Activated CD4-positive, alpha-beta T cell treated with anti-CD3 and anti-CD28 coated beads, Interleukin-2, amount 10 ng/mL, durations not matched to agents 24 days and 14 days (primary cell): ENCODE measurements at regions of chr1 and their contacts with region 1.

Region 1: GRCh38 chr1:179002552-179003345 is 22.9 kb upstream of the FAM20B start:
- DNase-seq: peak; percentile 90
- H3K4me3 Mint-ChIP-seq: no peak overlapping the region
- H3K27ac Mint-ChIP-seq: peak overlapping the region; percentile 21
- H3K4me1 Mint-ChIP-seq: peaks cover 6% of the 10 kb centered on the region
- H3K27me3 Mint-ChIP-seq: no peaks in the 10 kb centered on the region

Region 2: GRCh38 chr1:178532392-178532791 is 470.4 kb before region 1 on chr1:
- intact Hi-C with region 1: loop called (anchors 2 kb)
- DNase-seq: peak; percentile 92
- H3K4me3 Mint-ChIP-seq: no peak overlapping the region
- H3K27ac Mint-ChIP-seq: no peak overlapping the region
- H3K4me1 Mint-ChIP-seq: peaks cover 2% of the 10 kb centered on the region
- H3K27me3 Mint-ChIP-seq: no peaks in the 10 kb centered on the region

Region 3: GRCh38 chr1:178542560-178543356 is 460.0 kb before region 1 on chr1:
- intact Hi-C with region 1: loop called (anchors 1 kb)
- DNase-seq: peak; percentile 97
- H3K4me3 Mint-ChIP-seq: peak overlapping the region; percentile 91
- H3K27ac Mint-ChIP-seq: peak overlapping the region; percentile 87
- H3K4me1 Mint-ChIP-seq: no peaks in the 10 kb centered on the region
- H3K27me3 Mint-ChIP-seq: no peaks in the 10 kb centered on the region

Region 4: GRCh38 chr1:178768423-178768822 is 234.3 kb before region 1 on chr1:
- intact Hi-C with region 1: loop called (anchors 1 kb)
- DNase-seq: peak; percentile 71
- H3K4me3 Mint-ChIP-seq: no peak overlapping the region
- H3K27ac Mint-ChIP-seq: no peak overlapping the region
- H3K4me1 Mint-ChIP-seq: no peaks in the 10 kb centered on the region
- H3K27me3 Mint-ChIP-seq: no peaks in the 10 kb centered on the region

Region 5: DNA sequence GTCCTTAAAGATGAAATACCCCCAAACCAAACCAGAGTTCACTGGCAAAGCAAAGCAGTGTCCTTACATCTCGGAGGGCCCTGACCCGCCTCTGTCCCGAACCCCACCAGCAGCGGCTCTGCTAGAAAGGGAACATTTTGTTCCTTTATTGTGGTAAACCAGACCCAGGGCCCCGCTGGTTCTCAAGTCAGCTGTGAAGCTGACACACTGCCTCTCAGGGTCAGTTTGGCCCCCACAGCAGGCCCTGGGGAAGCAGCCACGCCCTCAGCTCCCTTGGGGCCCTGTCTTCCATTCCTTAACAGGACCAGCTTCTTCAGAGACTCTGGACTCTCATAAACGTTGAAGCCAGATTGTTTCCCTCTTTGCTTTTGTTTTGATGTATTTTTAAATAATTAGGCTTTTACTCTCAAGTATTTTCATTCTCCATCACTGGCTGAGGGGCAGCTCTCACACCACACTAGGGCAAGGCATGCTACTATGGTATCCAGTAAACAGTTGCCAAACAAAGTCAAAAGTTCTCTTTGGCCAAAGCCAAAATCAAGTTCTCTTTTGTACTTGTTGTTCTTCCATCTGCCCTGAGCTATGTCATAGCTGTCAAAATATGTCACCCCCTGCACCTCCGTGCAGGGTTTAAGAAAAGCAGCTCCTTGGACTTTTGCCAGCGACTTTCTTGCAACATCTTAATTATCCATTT is 70.7 kb before region 1 on chr1:
- intact Hi-C with region 1: no loop called
- DNase-seq: peak; percentile 34
- H3K4me3 Mint-ChIP-seq: no peak overlapping the region
- H3K27ac Mint-ChIP-seq: no peak overlapping the region
- H3K4me1 Mint-ChIP-seq: no peaks in the 10 kb centered on the region
- H3K27me3 Mint-ChIP-seq: no peaks in the 10 kb centered on the region